Right cardiac atrium (tissue), 5 donors: ENCODE measurements at regions of chr2 and their contacts with region 1.

Region 1: GRCh38 chr2:6773007-6773693 is 92.6 kb downstream of the CMPK2 start:
- DNase-seq: peak; percentile 39 to 79 (median 77)
- ATAC-seq: peak; percentile 86 to 88
- H3K4me3 ChIP-seq: no peak overlapping the region
- H3K27ac ChIP-seq: no peak overlapping the region
- H3K4me1 ChIP-seq: no peaks in the 10 kb centered on the region
- H3K27me3 ChIP-seq: no peaks in the 10 kb centered on the region

Region 2: DNA sequence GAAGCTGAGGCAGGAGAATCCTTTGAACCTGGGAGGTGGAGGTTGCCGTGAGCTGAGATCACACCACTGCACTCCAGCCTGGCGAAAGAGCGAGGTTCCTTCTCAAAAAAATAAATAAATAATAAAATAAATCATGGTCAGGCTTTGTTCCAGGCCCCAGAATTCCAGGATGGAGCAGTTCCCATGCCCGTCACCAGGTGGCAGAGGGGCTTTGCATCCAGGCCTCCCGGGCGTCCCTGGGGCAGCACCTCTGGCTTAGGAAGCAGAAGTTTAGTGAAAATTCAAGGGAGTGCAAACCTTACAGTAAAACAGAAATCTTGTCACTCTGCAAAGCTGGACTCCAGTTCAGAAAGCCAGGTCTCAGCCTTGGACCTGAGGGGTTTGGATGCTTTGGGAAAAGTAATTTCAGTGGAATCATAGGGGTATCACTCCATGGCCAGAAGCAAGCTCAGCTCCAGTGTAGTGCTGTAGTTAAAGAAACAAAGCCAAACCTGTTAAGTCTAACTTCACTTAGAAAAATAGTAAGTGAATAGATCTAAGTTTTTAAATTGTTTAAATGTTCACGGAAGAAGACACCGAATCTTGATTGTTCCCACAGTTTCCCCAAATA is 420.1 kb before region 1 on chr2:
- intact Hi-C with region 1: loop called (anchors 2 to 10 kb)
- DNase-seq: peak; percentile 36 to 74 (median 56)
- ATAC-seq: peak; percentile 47 to 60
- H3K4me3 ChIP-seq: no peak overlapping the region
- H3K27ac ChIP-seq: no peak overlapping the region
- H3K4me1 ChIP-seq: no peaks in the 10 kb centered on the region
- H3K27me3 ChIP-seq: no peaks in the 10 kb centered on the region